ENCODE measurements at regions of chr17 and their contacts with region 1.

Region 1: DNA sequence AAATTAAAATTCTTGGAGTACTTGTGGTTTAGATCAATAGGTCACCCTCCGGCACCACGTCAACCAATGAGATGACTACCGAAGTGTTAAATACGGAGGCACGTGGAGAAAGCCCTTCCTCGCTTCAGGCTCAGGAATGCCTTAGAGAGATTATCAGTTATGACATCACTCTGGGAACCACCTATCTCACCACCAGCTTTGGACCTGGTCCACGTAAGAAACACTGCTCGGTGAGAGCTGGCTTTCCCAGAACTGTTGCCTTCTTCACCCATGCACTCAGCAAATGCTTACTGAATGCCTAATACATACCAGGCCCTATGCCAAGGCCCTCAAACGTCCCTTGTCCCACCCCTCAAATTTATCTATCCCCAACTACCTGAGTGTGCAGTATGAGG is 71.3 kb downstream of the SMG6 start:
- DNase-seq: peak; percentile 34
- H3K4me3 ChIP-seq: no peak overlapping the region
- H3K27ac ChIP-seq: peak overlapping the region; percentile 13
- H3K4me1 ChIP-seq: peaks cover 9% of the 10 kb centered on the region
- H3K27me3 ChIP-seq: no peaks in the 10 kb centered on the region
- CTCF ChIP-seq: no peak
- POLR2A ChIP-seq: no peak

Region 2: DNA sequence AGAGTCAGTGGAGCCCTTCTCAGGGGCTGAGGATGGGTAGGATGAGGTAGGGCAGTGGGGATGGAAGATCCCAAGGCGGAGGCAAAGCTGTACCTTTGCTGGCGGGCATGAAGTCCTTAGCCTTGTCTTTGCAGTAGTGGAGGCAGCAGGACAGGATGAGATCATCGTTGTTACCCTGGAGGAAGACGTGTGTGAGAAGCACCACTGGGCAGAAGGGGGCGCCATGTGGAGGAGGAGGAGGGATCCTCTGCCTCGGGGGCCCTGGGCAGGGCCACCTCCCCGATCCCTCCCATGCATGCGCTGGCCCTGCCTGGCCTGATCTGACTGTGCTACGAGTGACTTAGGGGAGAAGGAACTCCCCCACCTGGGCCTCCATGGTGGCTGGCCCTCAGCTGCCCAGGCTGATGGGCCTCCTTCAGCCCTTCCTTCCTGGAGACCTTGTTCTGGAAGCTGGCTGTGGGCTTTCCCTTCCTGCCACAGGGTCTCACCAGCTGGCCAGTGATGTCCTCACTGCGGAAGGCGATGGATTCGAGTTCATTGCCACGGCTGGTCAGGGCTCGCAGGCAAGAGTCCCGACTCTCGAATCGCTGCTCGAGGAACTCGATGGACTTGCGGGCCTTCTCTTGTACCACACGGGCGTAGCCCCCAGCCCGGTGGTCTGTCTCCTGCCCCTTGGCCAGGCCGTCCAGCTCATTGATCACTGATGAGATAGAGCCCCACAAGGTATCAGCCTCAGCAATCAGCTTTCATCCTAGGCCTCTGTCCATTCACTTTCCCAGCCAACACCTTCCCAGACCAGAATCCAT is 167.1 kb before region 1 on chr17:
- CTCF ChIA-PET with region 1: interaction called, 18 read pairs
- POLR2A ChIA-PET with region 1: no interaction called
- dilution Hi-C with region 1: no loop called
- intact Hi-C with region 1: loop called (anchors 1 kb)
- DNase-seq: peak; percentile 79
- H3K4me3 ChIP-seq: no peak overlapping the region
- H3K27ac ChIP-seq: peak overlapping the region; percentile 78
- H3K4me1 ChIP-seq: peaks cover 53% of the 10 kb centered on the region
- H3K27me3 ChIP-seq: no peaks in the 10 kb centered on the region
- CTCF ChIP-seq: peak; percentile 66 to 70
- POLR2A ChIP-seq: no peak

Region 3: DNA sequence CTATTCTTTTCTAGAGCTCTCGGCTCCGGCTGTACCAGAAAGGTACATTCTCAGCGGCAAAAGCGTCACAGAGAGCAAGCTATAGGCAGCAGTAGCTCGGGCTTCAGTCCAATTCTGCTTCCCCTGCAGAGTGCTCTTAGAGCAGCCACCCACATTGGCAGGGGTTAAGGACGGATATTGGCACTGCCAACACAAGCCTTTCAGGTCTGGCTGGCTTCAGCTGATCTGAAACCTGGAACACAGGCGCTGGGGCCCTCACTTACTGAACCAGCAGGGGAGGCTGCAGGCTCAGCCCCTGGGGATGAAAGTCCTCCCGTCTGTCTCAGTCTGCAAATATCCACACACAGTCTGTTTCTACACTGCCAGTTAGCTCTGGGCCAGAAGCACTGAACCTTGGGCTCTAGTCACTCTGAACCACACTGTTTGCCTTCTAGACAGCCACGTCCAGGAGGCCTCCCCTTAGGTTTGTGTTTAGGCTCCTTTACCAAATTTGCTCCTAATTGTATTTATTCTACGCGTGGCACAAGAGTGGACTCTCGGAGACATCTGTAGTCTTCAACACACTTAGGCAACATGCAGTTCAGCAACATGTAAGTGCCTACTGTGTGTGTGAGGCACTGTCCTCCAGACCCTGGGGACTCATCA is 137.2 kb before region 1 on chr17:
- CTCF ChIA-PET with region 1: interaction called, 31 read pairs
- POLR2A ChIA-PET with region 1: interaction called, 6 read pairs
- dilution Hi-C with region 1: no loop called
- intact Hi-C with region 1: no loop called
- DNase-seq: peak; percentile 78
- H3K4me3 ChIP-seq: no peak overlapping the region
- H3K27ac ChIP-seq: no peak overlapping the region
- H3K4me1 ChIP-seq: peaks cover 15% of the 10 kb centered on the region
- H3K27me3 ChIP-seq: no peaks in the 10 kb centered on the region
- CTCF ChIP-seq: peak; percentile 39 to 77
- POLR2A ChIP-seq: no peak

Region 4: DNA sequence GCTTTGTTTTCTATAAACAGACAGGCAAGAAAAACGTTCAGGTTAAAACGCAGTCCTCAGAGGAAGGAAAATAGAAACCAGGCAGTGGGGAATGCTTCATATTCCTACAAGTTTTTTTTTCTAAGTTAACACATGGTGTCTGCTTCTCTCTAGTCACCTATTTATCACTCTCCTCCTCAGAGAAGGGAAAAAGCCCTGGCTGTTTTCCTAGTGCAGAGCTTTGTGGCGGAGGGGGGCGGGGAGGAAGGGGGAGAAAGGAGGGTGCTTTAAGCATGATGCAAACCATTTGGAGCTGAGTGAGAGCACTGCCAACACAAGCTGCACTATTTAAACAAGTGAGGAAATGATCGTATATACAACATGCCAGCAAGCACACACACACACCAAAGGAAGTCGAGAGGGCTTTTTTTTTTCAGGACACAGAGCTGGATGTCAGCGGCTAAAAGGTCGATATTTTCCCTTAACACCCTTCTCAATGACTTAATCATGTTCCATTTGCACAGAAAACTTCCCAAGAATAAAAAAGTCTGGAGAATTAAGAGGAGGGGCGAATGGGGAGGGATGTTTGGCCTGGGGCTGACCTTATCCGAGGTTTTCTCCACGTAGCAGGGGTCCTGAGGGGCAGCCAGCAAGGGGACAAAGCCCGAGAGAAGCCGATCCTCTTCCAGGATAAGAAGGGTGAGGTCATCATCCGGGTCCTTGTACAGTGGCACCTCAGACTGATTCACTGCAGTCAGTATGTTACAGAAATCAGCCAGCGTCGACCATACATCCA is 60.0 kb before region 1 on chr17:
- CTCF ChIA-PET with region 1: interaction called, 24 read pairs
- POLR2A ChIA-PET with region 1: interaction called, 3 read pairs
- dilution Hi-C with region 1: no loop called
- intact Hi-C with region 1: loop called (anchors 2 kb)
- DNase-seq: peak; percentile 98
- H3K4me3 ChIP-seq: peak overlapping the region in 1 of 3 experiments; percentile 40
- H3K27ac ChIP-seq: peak overlapping the region; percentile 94
- H3K4me1 ChIP-seq: peaks cover 59% of the 10 kb centered on the region
- H3K27me3 ChIP-seq: no peaks in the 10 kb centered on the region
- CTCF ChIP-seq: no peak
- POLR2A ChIP-seq: peak; percentile 43

Region 5: DNA sequence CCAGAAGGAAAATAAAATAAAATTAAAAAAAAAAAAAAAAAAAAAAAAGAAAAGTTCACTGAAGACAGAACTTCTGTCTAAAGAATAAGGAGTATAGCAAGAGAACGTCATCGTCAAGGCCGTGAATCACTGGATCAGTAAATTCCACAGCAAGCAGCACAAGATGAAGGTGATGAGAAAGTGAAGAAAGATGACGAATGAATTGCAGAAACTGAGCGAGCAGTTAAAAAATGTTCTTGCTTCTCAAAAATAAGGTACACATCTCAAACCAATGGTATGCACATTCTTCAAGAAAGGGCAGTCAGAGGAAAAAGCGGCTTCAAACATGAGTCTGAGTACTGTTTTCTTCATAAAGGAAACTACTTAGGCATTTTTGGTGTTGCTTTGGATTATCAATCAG is 33.3 kb before region 1 on chr17:
- CTCF ChIA-PET with region 1: interaction called, 12 read pairs
- POLR2A ChIA-PET with region 1: no interaction called
- dilution Hi-C with region 1: no loop called
- intact Hi-C with region 1: no loop called
- DNase-seq: no peak
- H3K4me3 ChIP-seq: no peak overlapping the region
- H3K27ac ChIP-seq: no peak overlapping the region
- H3K4me1 ChIP-seq: peaks cover 10% of the 10 kb centered on the region
- H3K27me3 ChIP-seq: no peaks in the 10 kb centered on the region
- CTCF ChIP-seq: no peak
- POLR2A ChIP-seq: no peak

Measured in endothelial cell of umbilical vein (primary cell).